ENCODE measurements at regions of chr6 and their contacts with region 1.

Region 1: DNA sequence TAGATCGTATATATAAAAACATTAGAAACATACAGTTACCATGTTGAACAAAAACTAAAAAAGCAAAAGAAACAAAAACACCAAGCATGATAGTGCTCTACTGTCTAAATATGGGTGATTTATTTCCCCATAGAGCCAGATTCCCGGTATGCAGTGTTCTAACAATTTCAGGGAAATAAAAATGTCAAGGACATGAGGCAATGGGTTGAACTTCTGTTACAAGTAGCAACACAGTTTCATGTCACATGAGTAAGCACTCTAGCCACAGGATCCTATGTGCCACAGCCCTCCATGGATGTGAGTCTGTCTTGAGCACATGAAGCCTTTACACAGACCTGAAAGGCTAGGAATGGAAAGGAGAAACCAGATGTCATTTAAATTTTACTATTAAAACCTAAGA is 96.0 kb downstream of the MAP3K5 start:
- DNase-seq: no peak
- H3K4me3 ChIP-seq: no peak overlapping the region
- H3K4me3 Mint-ChIP-seq: no peak overlapping the region
- H3K27ac ChIP-seq: no peak overlapping the region
- H3K27ac Mint-ChIP-seq: peak overlapping the region in 1 of 7 donors; percentile 6
- H3K4me1 ChIP-seq: peaks cover 13% of the 10 kb centered on the region
- H3K4me1 Mint-ChIP-seq: peaks cover 15 to 26% (median 18%) of the 10 kb centered on the region in 4 donors
- H3K27me3 ChIP-seq: no peaks in the 10 kb centered on the region
- H3K27me3 Mint-ChIP-seq: no peaks in the 10 kb centered on the region

Region 2: GRCh38 chr6:136031982-136032381 is 664.3 kb before region 1 on chr6:
- CTCF ChIA-PET with region 1: no interaction called
- POLR2A ChIA-PET with region 1: no interaction called
- intact Hi-C with region 1: no loop called
- DNase-seq: no peak
- H3K4me3 ChIP-seq: no peak overlapping the region
- H3K4me3 Mint-ChIP-seq: no peak overlapping the region
- H3K27ac ChIP-seq: no peak overlapping the region
- H3K27ac Mint-ChIP-seq: no peak overlapping the region
- H3K4me1 ChIP-seq: no peaks in the 10 kb centered on the region
- H3K4me1 Mint-ChIP-seq: no peaks in the 10 kb centered on the region
- H3K27me3 ChIP-seq: no peaks in the 10 kb centered on the region
- H3K27me3 Mint-ChIP-seq: peaks cover 0 to 5% of the 10 kb centered on the region in 2 donors

Region 3: DNA sequence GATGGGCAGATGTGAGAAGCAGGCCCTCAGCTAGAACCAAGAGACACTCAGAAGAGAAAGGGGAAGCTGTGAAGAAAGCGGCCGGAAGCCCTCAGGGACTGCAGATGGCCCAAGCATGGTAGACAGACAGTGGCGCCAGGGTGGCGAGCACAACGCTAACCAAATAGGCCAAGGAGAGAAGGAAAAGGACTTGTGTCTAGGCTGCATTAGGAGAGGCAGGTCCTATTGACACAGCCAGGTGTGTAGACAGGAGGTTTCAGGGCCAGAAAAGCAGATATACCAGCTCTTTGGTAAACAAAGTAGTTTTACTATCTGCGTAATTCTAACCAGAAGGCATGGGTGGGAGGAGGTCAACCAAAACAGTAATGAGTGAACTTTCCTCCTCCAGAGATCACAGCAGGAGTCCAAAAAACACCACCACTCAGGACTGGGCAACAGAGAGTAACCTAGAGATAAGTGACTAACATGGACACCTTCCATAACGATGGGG is 130.2 kb before region 1 on chr6:
- CTCF ChIA-PET with region 1: no interaction called
- POLR2A ChIA-PET with region 1: no interaction called
- intact Hi-C with region 1: no loop called
- DNase-seq: no peak
- H3K4me3 ChIP-seq: no peak overlapping the region
- H3K4me3 Mint-ChIP-seq: no peak overlapping the region
- H3K27ac ChIP-seq: no peak overlapping the region
- H3K27ac Mint-ChIP-seq: peak overlapping the region in 3 of 7 donors; percentile 24 to 47 (median 43)
- H3K4me1 ChIP-seq: peaks cover 45% of the 10 kb centered on the region
- H3K4me1 Mint-ChIP-seq: peaks cover 4 to 34% (median 26%) of the 10 kb centered on the region in 4 donors
- H3K27me3 ChIP-seq: no peaks in the 10 kb centered on the region
- H3K27me3 Mint-ChIP-seq: no peaks in the 10 kb centered on the region

Region 4: DNA sequence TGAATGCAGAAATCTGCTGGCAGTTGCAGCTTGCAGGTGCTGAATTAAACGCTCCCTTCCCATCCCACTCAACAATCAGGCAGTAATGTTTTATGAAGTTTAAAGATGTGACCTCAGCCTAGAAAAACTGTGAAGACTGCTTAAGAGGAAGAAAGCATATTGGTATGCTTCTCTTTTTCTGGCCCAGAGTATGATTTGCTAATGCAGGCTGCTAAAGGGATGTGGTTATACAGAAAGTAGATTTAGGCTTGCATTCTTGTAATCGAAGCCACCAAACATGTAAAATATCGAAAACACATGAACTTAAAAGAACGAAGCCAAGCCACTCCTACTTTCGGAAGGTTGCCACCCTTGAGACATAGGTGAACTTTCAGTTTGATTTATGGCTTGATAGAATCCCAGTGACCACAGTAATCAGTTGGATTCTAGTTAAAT is 55.3 kb after region 1 on chr6:
- CTCF ChIA-PET with region 1: no interaction called
- POLR2A ChIA-PET with region 1: interaction called, 4 read pairs
- intact Hi-C with region 1: loop called (anchors 1 kb)
- DNase-seq: peak; percentile 42 to 76 (median 62)
- H3K4me3 ChIP-seq: peak overlapping the region in 1 of 2 donors; percentile 23
- H3K4me3 Mint-ChIP-seq: peak overlapping the region; percentile 59 to 91 (median 75)
- H3K27ac ChIP-seq: peak overlapping the region; percentile 51
- H3K27ac Mint-ChIP-seq: peak overlapping the region; percentile 79 to 97 (median 91)
- H3K4me1 ChIP-seq: peaks cover 90% of the 10 kb centered on the region
- H3K4me1 Mint-ChIP-seq: peaks cover 66 to 94% (median 83%) of the 10 kb centered on the region in 4 donors
- H3K27me3 ChIP-seq: no peaks in the 10 kb centered on the region
- H3K27me3 Mint-ChIP-seq: no peaks in the 10 kb centered on the region

Measured in CD4-positive, alpha-beta memory T cell (primary cell).